ENCODE measurements at regions of chr17 and their contacts with region 1.

Region 1: GRCh38 chr17:64420143-64420971 is 28.6 kb upstream of the MILR1 start:
- DNase-seq: peak in 7 of 9 donors; percentile 54 to 83 (median 75)
- ATAC-seq: peak; percentile 88
- H3K4me3 ChIP-seq: no peak overlapping the region
- H3K4me3 Mint-ChIP-seq: no peak overlapping the region
- H3K27ac ChIP-seq: no peak overlapping the region
- H3K27ac Mint-ChIP-seq: no peak overlapping the region
- H3K4me1 ChIP-seq: no peaks in the 10 kb centered on the region
- H3K4me1 Mint-ChIP-seq: peaks cover 0 to 11% (median 0%) of the 10 kb centered on the region in 7 donors
- H3K27me3 ChIP-seq: peaks cover 0 to 3% of the 10 kb centered on the region in 2 donors
- H3K27me3 Mint-ChIP-seq: peaks cover 0 to 5% (median 0%) of the 10 kb centered on the region in 5 donors

Region 2: GRCh38 chr17:64240741-64241347 is 179.5 kb before region 1 on chr17:
- CTCF ChIA-PET with region 1: no interaction called
- POLR2A ChIA-PET with region 1: no interaction called
- intact Hi-C with region 1: no loop called
- DNase-seq: no peak
- ATAC-seq: no peak
- H3K4me3 ChIP-seq: no peak overlapping the region
- H3K4me3 Mint-ChIP-seq: no peak overlapping the region
- H3K27ac ChIP-seq: no peak overlapping the region
- H3K27ac Mint-ChIP-seq: no peak overlapping the region
- H3K4me1 ChIP-seq: peaks cover 0 to 5% of the 10 kb centered on the region in 2 donors
- H3K4me1 Mint-ChIP-seq: peaks cover 4 to 53% (median 33%) of the 10 kb centered on the region in 7 donors
- H3K27me3 ChIP-seq: no peaks in the 10 kb centered on the region
- H3K27me3 Mint-ChIP-seq: no peaks in the 10 kb centered on the region

Region 3: GRCh38 chr17:64320613-64321553 is 99.5 kb before region 1 on chr17:
- CTCF ChIA-PET with region 1: interaction called, 182 read pairs
- POLR2A ChIA-PET with region 1: interaction called, 25 read pairs
- intact Hi-C with region 1: loop called (anchors 1 kb)
- DNase-seq: peak in 8 of 9 donors; percentile 32 to 67 (median 54)
- ATAC-seq: peak; percentile 85
- H3K4me3 ChIP-seq: no peak overlapping the region
- H3K4me3 Mint-ChIP-seq: peak overlapping the region in 6 of 10 donors; percentile 20 to 62 (median 44)
- H3K27ac ChIP-seq: no peak overlapping the region
- H3K27ac Mint-ChIP-seq: peak overlapping the region in 8 of 9 donors; percentile 60 to 95 (median 82)
- H3K4me1 ChIP-seq: peaks cover 0 to 7% of the 10 kb centered on the region in 2 donors
- H3K4me1 Mint-ChIP-seq: peaks cover 2 to 35% (median 22%) of the 10 kb centered on the region in 7 donors
- H3K27me3 ChIP-seq: no peaks in the 10 kb centered on the region
- H3K27me3 Mint-ChIP-seq: peaks cover 0 to 9% (median 0%) of the 10 kb centered on the region in 5 donors

Region 4: GRCh38 chr17:64348666-64349065 is 71.7 kb before region 1 on chr17:
- CTCF ChIA-PET with region 1: interaction called, 29 read pairs
- POLR2A ChIA-PET with region 1: interaction called, 6 read pairs
- intact Hi-C with region 1: loop called in 1 of 2 experiments (anchors 1 kb)
- DNase-seq: no peak
- ATAC-seq: no peak
- H3K4me3 ChIP-seq: no peak overlapping the region
- H3K4me3 Mint-ChIP-seq: peak overlapping the region in 6 of 10 donors; percentile 21 to 86 (median 73)
- H3K27ac ChIP-seq: peak overlapping the region; percentile 62
- H3K27ac Mint-ChIP-seq: peak overlapping the region in 8 of 9 donors; percentile 90 to 99 (median 95)
- H3K4me1 ChIP-seq: peaks cover 7 to 36% of the 10 kb centered on the region in 2 donors
- H3K4me1 Mint-ChIP-seq: peaks cover 19 to 58% (median 36%) of the 10 kb centered on the region in 7 donors
- H3K27me3 ChIP-seq: no peaks in the 10 kb centered on the region
- H3K27me3 Mint-ChIP-seq: peaks cover 0 to 2% (median 0%) of the 10 kb centered on the region in 5 donors

Region 5: DNA sequence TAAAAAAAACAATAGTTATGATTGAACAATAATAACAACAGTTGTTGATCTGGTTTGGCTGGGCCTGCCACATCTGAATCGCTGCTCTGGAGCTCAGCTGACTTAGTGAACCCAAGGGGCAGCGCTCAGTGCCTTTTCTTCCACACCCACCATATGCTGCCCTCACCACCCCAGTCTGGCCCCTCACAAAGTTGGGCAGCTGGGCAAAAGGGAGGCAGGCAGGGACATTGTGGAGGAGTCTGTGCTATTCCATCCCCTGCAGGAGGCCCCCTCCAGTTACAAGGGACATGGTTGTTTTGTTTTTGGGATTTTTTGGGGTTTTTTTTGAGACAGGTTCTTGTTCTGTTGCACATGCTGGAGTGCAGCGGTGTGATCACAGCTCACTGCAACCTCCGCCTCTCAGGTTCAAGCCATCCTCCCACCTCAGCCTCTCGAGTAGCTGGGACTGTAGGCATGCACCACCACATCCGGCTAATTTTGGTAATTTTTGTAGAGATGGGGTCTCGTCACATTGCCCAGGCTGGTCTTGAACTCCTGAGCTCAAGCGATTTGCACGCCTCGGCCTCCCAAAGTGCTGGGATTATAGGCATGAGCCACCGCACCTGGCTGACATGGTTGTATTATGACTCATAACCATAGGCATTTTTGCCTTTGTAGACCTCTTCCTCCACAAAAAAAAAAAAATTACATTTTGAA is 21.1 kb before region 1 on chr17:
- CTCF ChIA-PET with region 1: interaction called, 9 read pairs
- POLR2A ChIA-PET with region 1: interaction called, 5 read pairs
- intact Hi-C with region 1: loop called in 1 of 2 experiments (anchors 1 kb)
- DNase-seq: no peak
- ATAC-seq: no peak
- H3K4me3 ChIP-seq: no peak overlapping the region
- H3K4me3 Mint-ChIP-seq: peak overlapping the region in 5 of 10 donors; percentile 34 to 97 (median 50)
- H3K27ac ChIP-seq: no peak overlapping the region
- H3K27ac Mint-ChIP-seq: peak overlapping the region in 4 of 9 donors; percentile 8 to 91 (median 66)
- H3K4me1 ChIP-seq: peaks cover 8 to 20% of the 10 kb centered on the region in 2 donors
- H3K4me1 Mint-ChIP-seq: peaks cover 13 to 61% (median 43%) of the 10 kb centered on the region in 7 donors
- H3K27me3 ChIP-seq: no peaks in the 10 kb centered on the region
- H3K27me3 Mint-ChIP-seq: no peaks in the 10 kb centered on the region

Region 6: GRCh38 chr17:64496786-64497564 is 76.6 kb after region 1 on chr17 and contains the start of gene POLG2:
- CTCF ChIA-PET with region 1: interaction called, 131 read pairs
- POLR2A ChIA-PET with region 1: interaction called, 32 read pairs
- intact Hi-C with region 1: no loop called
- DNase-seq: peak; percentile 93 to 96 (median 95)
- ATAC-seq: peak; percentile 89
- H3K4me3 ChIP-seq: peak within 1 kb of the TSS; percentile 69
- H3K4me3 Mint-ChIP-seq: peak within 1 kb of the TSS; percentile 96 to 100 (median 99)
- H3K27ac ChIP-seq: peak within 1 kb of the TSS; percentile 83
- H3K27ac Mint-ChIP-seq: peak within 1 kb of the TSS; percentile 91 to 100 (median 97)
- H3K4me1 ChIP-seq: peaks cover 23 to 31% of the 10 kb centered on the region in 2 donors
- H3K4me1 Mint-ChIP-seq: peaks cover 44 to 88% (median 76%) of the 10 kb centered on the region in 7 donors
- H3K27me3 ChIP-seq: no peaks in the 10 kb centered on the region
- H3K27me3 Mint-ChIP-seq: no peaks in the 10 kb centered on the region
- total RNA-seq, gene POLG2: 34.5 to 69.6 (median 41.9) TPM

Region 7: GRCh38 chr17:64653325-64653984 is 233.1 kb after region 1 on chr17:
- CTCF ChIA-PET with region 1: interaction called, 12 read pairs
- POLR2A ChIA-PET with region 1: interaction called, 3 read pairs
- intact Hi-C with region 1: loop called (anchors 1 kb)
- DNase-seq: no peak
- ATAC-seq: no peak
- H3K4me3 ChIP-seq: no peak overlapping the region
- H3K4me3 Mint-ChIP-seq: peak overlapping the region in 1 of 10 donors; percentile 0
- H3K27ac ChIP-seq: no peak overlapping the region
- H3K27ac Mint-ChIP-seq: peak overlapping the region in 4 of 9 donors; percentile 8 to 65 (median 36)
- H3K4me1 ChIP-seq: peaks cover 6 to 8% of the 10 kb centered on the region in 2 donors
- H3K4me1 Mint-ChIP-seq: peaks cover 27 to 73% (median 53%) of the 10 kb centered on the region in 7 donors
- H3K27me3 ChIP-seq: no peaks in the 10 kb centered on the region
- H3K27me3 Mint-ChIP-seq: no peaks in the 10 kb centered on the region